ENCODE measurements at regions of chr13 and their contacts with region 1.

Region 1: DNA sequence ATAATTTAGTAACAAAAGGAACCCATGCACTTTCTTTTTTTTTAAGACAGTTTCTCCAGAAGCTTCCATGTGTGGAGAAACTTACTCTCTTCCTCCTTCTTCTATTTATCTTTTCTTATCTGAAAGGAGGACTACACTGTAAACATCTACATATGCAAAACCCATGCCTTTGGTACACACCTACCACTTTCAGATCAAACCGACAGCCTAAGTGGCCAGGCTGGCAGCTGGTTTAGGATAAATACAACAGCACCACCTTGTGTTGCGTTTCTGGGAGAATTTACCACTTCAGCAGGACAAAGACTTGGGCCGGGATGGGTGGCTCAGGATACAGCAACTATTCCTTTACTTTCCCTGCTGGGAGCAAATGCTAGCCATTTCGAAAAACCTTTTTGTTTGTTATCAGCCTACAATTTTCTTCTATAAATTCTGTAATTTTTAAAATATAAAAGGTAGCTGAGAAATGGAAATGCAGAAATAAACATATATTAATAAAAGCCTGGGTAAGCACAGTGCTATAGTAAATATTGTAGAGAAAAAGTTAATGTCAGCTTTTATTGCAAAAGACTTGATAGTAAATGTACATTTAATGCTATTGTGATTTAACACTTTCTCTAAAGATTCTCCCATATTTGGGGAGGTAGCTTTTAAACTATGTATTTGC is 94.0 kb upstream of the RFC3 start:
- DNase-seq: peak in 34 of 35 experiments; percentile 16 to 84 (median 48)
- ATAC-seq: peak; percentile 77 to 89 (median 85)
- H3K4me3 ChIP-seq: no peak overlapping the region
- H3K4me3 Mint-ChIP-seq: peak overlapping the region in 1 of 3 donors; percentile 26
- H3K27ac ChIP-seq: no peak overlapping the region
- H3K27ac Mint-ChIP-seq: peak overlapping the region; percentile 12 to 52
- H3K4me1 ChIP-seq: no peaks in the 10 kb centered on the region
- H3K4me1 Mint-ChIP-seq: peaks cover 21 to 28% (median 23%) of the 10 kb centered on the region in 3 donors
- H3K27me3 ChIP-seq: no peaks in the 10 kb centered on the region
- H3K27me3 Mint-ChIP-seq: no peaks in the 10 kb centered on the region

Region 2: GRCh38 chr13:33228648-33229445 is 495.1 kb before region 1 on chr13:
- CTCF ChIA-PET with region 1: interaction called, 11 to 22 read pairs
- POLR2A ChIA-PET with region 1: no interaction called
- DNase-seq: peak in 5 of 35 experiments; percentile 2 to 62 (median 10)
- ATAC-seq: peak in 3 of 4 experiments; percentile 44 to 50 (median 49)
- H3K4me3 ChIP-seq: no peak overlapping the region
- H3K4me3 Mint-ChIP-seq: no peak overlapping the region
- H3K27ac ChIP-seq: no peak overlapping the region
- H3K27ac Mint-ChIP-seq: no peak overlapping the region
- H3K4me1 ChIP-seq: no peaks in the 10 kb centered on the region
- H3K4me1 Mint-ChIP-seq: peaks cover 3 to 4% (median 3%) of the 10 kb centered on the region in 3 donors
- H3K27me3 ChIP-seq: no peaks in the 10 kb centered on the region
- H3K27me3 Mint-ChIP-seq: peaks cover 0 to 4% of the 10 kb centered on the region in 2 donors

Region 3: GRCh38 chr13:33542283-33543088 is 181.4 kb before region 1 on chr13:
- CTCF ChIA-PET with region 1: interaction called in 1 of 2 experiments, 11 read pairs
- POLR2A ChIA-PET with region 1: no interaction called
- DNase-seq: peak; percentile 96 to 99 (median 98)
- ATAC-seq: peak; percentile 85 to 87 (median 86)
- H3K4me3 ChIP-seq: peak overlapping the region; percentile 74 to 88
- H3K4me3 Mint-ChIP-seq: peak overlapping the region; percentile 84 to 96 (median 93)
- H3K27ac ChIP-seq: peak overlapping the region; percentile 99
- H3K27ac Mint-ChIP-seq: peak overlapping the region; percentile 100
- H3K4me1 ChIP-seq: peaks cover 19 to 29% of the 10 kb centered on the region in 2 experiments
- H3K4me1 Mint-ChIP-seq: peaks cover 37 to 58% (median 44%) of the 10 kb centered on the region in 3 donors
- H3K27me3 ChIP-seq: no peaks in the 10 kb centered on the region
- H3K27me3 Mint-ChIP-seq: no peaks in the 10 kb centered on the region

Region 4: GRCh38 chr13:33560726-33561125 is 163.2 kb before region 1 on chr13:
- CTCF ChIA-PET with region 1: no interaction called
- POLR2A ChIA-PET with region 1: no interaction called
- DNase-seq: no peak
- ATAC-seq: no peak
- H3K4me3 ChIP-seq: no peak overlapping the region
- H3K4me3 Mint-ChIP-seq: no peak overlapping the region
- H3K27ac ChIP-seq: no peak overlapping the region
- H3K27ac Mint-ChIP-seq: no peak overlapping the region
- H3K4me1 ChIP-seq: no peaks in the 10 kb centered on the region
- H3K4me1 Mint-ChIP-seq: no peaks in the 10 kb centered on the region
- H3K27me3 ChIP-seq: no peaks in the 10 kb centered on the region
- H3K27me3 Mint-ChIP-seq: peaks cover 5 to 10% of the 10 kb centered on the region in 2 donors

Region 5: GRCh38 chr13:33710924-33711323 is 13.0 kb before region 1 on chr13:
- CTCF ChIA-PET with region 1: interaction called in 1 of 2 experiments, 3 read pairs
- POLR2A ChIA-PET with region 1: interaction called in 1 of 2 experiments, 11 read pairs
- DNase-seq: no peak
- ATAC-seq: no peak
- H3K4me3 ChIP-seq: no peak overlapping the region
- H3K4me3 Mint-ChIP-seq: no peak overlapping the region
- H3K27ac ChIP-seq: no peak overlapping the region
- H3K27ac Mint-ChIP-seq: no peak overlapping the region
- H3K4me1 ChIP-seq: no peaks in the 10 kb centered on the region
- H3K4me1 Mint-ChIP-seq: no peaks in the 10 kb centered on the region
- H3K27me3 ChIP-seq: peaks cover 0 to 13% of the 10 kb centered on the region in 2 experiments
- H3K27me3 Mint-ChIP-seq: peaks cover 7 to 17% of the 10 kb centered on the region in 2 donors

Region 6: GRCh38 chr13:34246516-34246915 is 522.6 kb after region 1 on chr13:
- CTCF ChIA-PET with region 1: no interaction called
- POLR2A ChIA-PET with region 1: no interaction called
- DNase-seq: no peak
- ATAC-seq: no peak
- H3K4me3 ChIP-seq: no peak overlapping the region
- H3K4me3 Mint-ChIP-seq: no peak overlapping the region
- H3K27ac ChIP-seq: no peak overlapping the region
- H3K27ac Mint-ChIP-seq: no peak overlapping the region
- H3K4me1 ChIP-seq: no peaks in the 10 kb centered on the region
- H3K4me1 Mint-ChIP-seq: no peaks in the 10 kb centered on the region
- H3K27me3 ChIP-seq: no peaks in the 10 kb centered on the region
- H3K27me3 Mint-ChIP-seq: no peaks in the 10 kb centered on the region